Activated CD4-positive, alpha-beta memory T cell treated with anti-CD3 and anti-CD28 coated beads for 36 hours (primary cell): ENCODE measurements at regions of chr2 and their contacts with region 1.

Region 1: DNA sequence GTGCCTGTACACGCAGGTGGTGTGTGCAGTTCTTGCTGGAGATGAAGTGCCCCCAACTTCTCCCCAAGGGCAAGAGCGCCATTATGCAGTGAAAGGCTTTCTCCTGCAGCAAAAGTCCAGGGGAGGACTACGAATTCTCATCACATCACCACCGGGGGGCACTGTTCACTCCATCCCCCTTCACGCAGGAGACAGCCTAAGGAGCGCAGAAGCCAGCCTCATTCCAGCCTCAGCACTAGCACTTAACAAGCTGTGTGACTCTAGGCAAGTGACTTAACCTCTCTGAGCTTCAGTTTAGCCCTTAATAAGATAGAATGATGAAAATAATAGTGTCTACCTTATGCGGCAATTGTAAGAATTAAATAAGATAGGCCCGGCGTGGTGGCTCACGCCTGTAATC is 32.3 kb downstream of the DNMT3A start:
- DNase-seq: peak; percentile 75
- H3K4me3 Mint-ChIP-seq: no peak overlapping the region
- H3K27ac Mint-ChIP-seq: no peak overlapping the region
- H3K4me1 Mint-ChIP-seq: peaks cover 87% of the 10 kb centered on the region
- H3K27me3 Mint-ChIP-seq: no peaks in the 10 kb centered on the region

Region 2: DNA sequence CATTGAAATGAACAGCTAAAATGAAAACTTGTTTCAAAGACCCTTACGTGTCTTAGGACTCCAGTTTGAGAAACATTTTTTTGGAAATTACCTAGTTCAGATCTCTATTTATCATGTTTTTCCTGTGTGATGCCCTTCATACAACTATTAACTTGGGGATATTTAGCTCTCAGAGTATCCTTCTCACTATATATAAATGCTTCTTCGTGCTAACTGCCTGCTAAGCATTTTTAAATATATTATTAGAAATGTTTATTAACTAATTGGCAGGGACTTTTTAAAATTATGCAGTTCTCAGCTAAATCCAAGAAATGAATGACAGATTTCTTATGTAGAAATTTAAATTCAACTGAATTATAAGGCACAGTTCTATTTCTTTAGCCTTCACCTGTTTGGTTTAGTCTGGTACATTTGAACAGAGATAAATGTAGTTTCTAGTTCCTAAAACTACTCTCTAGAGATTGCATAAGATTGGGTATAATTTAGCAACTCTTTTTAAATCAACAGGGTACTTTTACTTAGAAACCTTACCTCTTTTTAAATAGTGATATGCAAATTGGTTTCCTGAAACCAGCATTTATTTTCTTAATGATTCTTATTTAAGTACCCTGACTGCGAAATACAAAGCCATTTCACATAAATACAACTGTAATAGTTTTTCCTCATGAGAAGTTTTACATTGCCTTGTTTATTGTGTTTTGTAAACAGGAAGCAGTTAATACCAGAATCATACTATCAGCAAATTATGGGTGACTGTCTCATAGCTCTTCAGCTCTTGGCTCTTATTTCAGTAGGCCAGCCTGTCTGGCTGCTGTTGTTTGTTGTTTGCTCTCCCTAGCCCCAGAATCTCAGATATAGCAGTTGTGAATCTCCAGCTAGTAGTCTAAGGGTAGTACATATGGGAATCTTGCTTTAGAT is 656.9 kb before region 1 on chr2:
- CTCF ChIA-PET with region 1: no interaction called
- POLR2A ChIA-PET with region 1: no interaction called
- intact Hi-C with region 1: no loop called
- DNase-seq: no peak
- H3K4me3 Mint-ChIP-seq: no peak overlapping the region
- H3K27ac Mint-ChIP-seq: no peak overlapping the region
- H3K4me1 Mint-ChIP-seq: peaks cover 8% of the 10 kb centered on the region
- H3K27me3 Mint-ChIP-seq: no peaks in the 10 kb centered on the region

Region 3: DNA sequence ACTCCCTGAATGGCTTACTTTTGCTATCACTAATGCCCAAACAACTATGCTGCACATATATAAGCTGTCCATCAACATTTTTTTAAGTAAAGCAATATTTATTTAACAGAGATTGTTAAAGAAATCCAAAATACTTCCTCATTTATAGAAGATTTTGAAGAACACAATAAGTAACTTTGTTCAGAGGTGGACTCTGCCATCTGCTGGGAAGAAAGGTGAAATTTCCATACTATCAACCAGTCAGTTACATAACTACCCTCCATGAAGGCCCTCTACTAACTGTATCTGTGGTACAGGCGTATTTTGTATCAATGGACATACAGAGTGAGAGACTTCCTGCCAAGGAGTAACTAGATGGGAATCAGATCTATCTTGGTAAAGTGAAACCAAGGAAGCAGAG is 258.0 kb after region 1 on chr2:
- CTCF ChIA-PET with region 1: interaction called, 13 read pairs
- POLR2A ChIA-PET with region 1: no interaction called
- intact Hi-C with region 1: no loop called
- DNase-seq: no peak
- H3K4me3 Mint-ChIP-seq: no peak overlapping the region
- H3K27ac Mint-ChIP-seq: no peak overlapping the region
- H3K4me1 Mint-ChIP-seq: no peaks in the 10 kb centered on the region
- H3K27me3 Mint-ChIP-seq: no peaks in the 10 kb centered on the region

Region 4: GRCh38 chr2:25651071-25651470 is 341.7 kb after region 1 on chr2:
- CTCF ChIA-PET with region 1: no interaction called
- POLR2A ChIA-PET with region 1: no interaction called
- intact Hi-C with region 1: no loop called
- DNase-seq: no peak
- H3K4me3 Mint-ChIP-seq: no peak overlapping the region
- H3K27ac Mint-ChIP-seq: no peak overlapping the region
- H3K4me1 Mint-ChIP-seq: no peaks in the 10 kb centered on the region
- H3K27me3 Mint-ChIP-seq: no peaks in the 10 kb centered on the region